Endothelial cell of umbilical vein (primary cell): ENCODE measurements at regions of chr4 and their contacts with region 1.

Region 1: GRCh38 chr4:169115897-169116254 is 105.8 kb upstream of the CBR4 start:
- DNase-seq: peak; percentile 95
- H3K4me3 ChIP-seq: no peak overlapping the region
- H3K27ac ChIP-seq: peak overlapping the region; percentile 77
- H3K4me1 ChIP-seq: peaks cover 32% of the 10 kb centered on the region
- H3K27me3 ChIP-seq: no peaks in the 10 kb centered on the region
- CTCF ChIP-seq: peak; percentile 43 to 52
- POLR2A ChIP-seq: no peak

Region 2: GRCh38 chr4:169045862-169046584 is 69.9 kb before region 1 on chr4:
- CTCF ChIA-PET with region 1: interaction called, 11 read pairs
- POLR2A ChIA-PET with region 1: no interaction called
- dilution Hi-C with region 1: no loop called
- intact Hi-C with region 1: no loop called
- DNase-seq: no peak
- H3K4me3 ChIP-seq: no peak overlapping the region
- H3K27ac ChIP-seq: no peak overlapping the region
- H3K4me1 ChIP-seq: peaks cover 13% of the 10 kb centered on the region
- H3K27me3 ChIP-seq: no peaks in the 10 kb centered on the region
- CTCF ChIP-seq: no peak
- POLR2A ChIP-seq: no peak

Region 3: DNA sequence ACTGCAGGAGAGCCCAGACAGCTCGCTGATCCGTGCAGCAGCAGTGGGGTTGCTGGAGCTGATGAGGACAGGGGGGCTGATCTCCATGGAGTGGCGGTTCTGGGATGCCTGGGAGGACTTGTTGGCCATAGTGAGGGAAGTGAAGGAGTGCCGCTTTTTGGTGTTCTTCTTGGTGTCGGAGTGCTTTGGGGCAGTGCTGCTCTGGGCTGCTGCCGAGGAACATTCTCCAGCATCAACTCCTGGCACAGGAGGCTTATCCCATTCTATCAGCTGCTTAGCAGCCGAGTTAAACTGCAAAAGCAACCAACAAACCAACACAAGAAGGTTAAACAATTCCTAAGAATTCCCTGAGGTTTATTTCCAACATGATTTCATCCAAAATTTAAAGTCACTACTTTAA is 20.5 kb after region 1 on chr4:
- CTCF ChIA-PET with region 1: interaction called, 8 read pairs
- POLR2A ChIA-PET with region 1: no interaction called
- dilution Hi-C with region 1: no loop called
- intact Hi-C with region 1: loop called (anchors 2 kb)
- DNase-seq: no peak
- H3K4me3 ChIP-seq: no peak overlapping the region
- H3K27ac ChIP-seq: peak overlapping the region; percentile 3
- H3K4me1 ChIP-seq: peaks cover 30% of the 10 kb centered on the region
- H3K27me3 ChIP-seq: no peaks in the 10 kb centered on the region
- CTCF ChIP-seq: no peak
- POLR2A ChIP-seq: no peak

Region 4: GRCh38 chr4:169225058-169225751 is 109.3 kb after region 1 on chr4:
- CTCF ChIA-PET with region 1: interaction called, 3 read pairs
- POLR2A ChIA-PET with region 1: interaction called, 5 read pairs
- dilution Hi-C with region 1: no loop called
- intact Hi-C with region 1: loop called (anchors 2 kb)
- DNase-seq: peak; percentile 87
- H3K4me3 ChIP-seq: no peak overlapping the region
- H3K27ac ChIP-seq: peak overlapping the region; percentile 79
- H3K4me1 ChIP-seq: peaks cover 38% of the 10 kb centered on the region
- H3K27me3 ChIP-seq: no peaks in the 10 kb centered on the region
- CTCF ChIP-seq: no peak
- POLR2A ChIP-seq: no peak

Region 5: DNA sequence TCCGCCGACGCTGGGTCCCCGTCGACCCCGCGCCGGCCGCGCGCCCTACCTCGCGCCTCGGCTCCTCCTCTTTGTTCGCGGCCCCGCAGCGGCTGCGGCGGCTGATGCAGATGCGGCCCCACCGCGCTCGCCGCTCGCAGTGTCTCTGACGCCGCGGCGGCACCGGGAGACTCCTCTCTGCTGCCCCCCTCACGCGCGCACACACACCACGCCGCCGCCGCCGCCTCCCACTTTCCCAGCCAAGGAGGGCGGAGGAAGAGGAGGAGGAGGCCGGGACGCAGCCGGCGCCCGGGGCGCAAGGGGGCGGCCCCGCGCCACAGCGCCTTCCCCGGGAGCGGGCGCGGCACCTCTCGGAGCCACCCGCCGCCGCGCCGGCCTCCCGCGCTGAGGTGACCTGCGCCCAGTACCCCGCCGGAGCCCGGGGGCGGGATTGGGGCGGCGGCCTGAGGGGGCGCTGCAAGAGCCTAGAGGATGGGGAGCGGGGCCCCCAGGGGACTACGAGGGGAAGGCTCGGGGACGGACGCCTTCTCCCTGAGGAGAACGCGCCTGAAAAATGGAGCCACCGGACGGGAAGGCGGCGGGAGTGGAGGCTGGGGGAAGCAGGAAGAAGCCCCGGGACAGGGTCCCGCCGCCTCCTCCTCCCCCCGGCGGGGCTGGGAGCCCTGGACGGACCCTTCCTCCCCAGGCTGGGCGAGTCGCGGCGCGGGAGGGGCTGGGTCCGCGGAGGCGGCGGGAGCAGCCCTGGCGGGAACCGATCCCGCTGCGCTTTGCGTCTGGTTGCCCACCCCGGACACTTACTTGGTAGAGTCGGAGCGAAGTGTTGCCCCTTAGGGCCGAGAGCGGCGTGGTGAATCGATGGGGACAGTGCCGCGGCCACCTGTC is 155.2 kb after region 1 on chr4 and contains the start of gene SH3RF1:
- CTCF ChIA-PET with region 1: interaction called, 19 read pairs
- POLR2A ChIA-PET with region 1: interaction called, 3 read pairs
- dilution Hi-C with region 1: no loop called
- intact Hi-C with region 1: loop called (anchors 1 kb)
- DNase-seq: peak; percentile 88
- H3K4me3 ChIP-seq: peak within 1 kb of the TSS; percentile 63 to 99 (median 99)
- H3K27ac ChIP-seq: peak within 1 kb of the TSS; percentile 91
- H3K4me1 ChIP-seq: peaks cover 42% of the 10 kb centered on the region
- H3K27me3 ChIP-seq: no peaks in the 10 kb centered on the region
- CTCF ChIP-seq: no peak
- POLR2A ChIP-seq: peak; percentile 65
- total RNA-seq, gene SH3RF1: 24.3 and 24.9 TPM in 2 replicates

Region 6: GRCh38 chr4:169485791-169486742 is 370.2 kb after region 1 on chr4:
- CTCF ChIA-PET with region 1: interaction called, 6 read pairs
- POLR2A ChIA-PET with region 1: no interaction called
- dilution Hi-C with region 1: no loop called
- intact Hi-C with region 1: loop called (anchors 2 kb)
- DNase-seq: peak; percentile 78
- H3K4me3 ChIP-seq: no peak overlapping the region
- H3K27ac ChIP-seq: no peak overlapping the region
- H3K4me1 ChIP-seq: peaks cover 3% of the 10 kb centered on the region
- H3K27me3 ChIP-seq: no peaks in the 10 kb centered on the region
- CTCF ChIP-seq: peak; percentile 39 to 52
- POLR2A ChIP-seq: no peak